HepG2 (cell line): ENCODE measurements at regions of chr2 and their contacts with region 1.

Region 1: GRCh38 chr2:193584522-193584938 is 1389.8 kb upstream of the TMEFF2 start:
- DNase-seq: peak; percentile 71
- ATAC-seq: peak; percentile 96
- H3K4me3 ChIP-seq: no peak overlapping the region
- H3K27ac ChIP-seq: no peak overlapping the region
- H3K4me1 ChIP-seq: peaks cover 14% of the 10 kb centered on the region; the same call in 1 of the 2 replicates
- H3K27me3 ChIP-seq: no peaks in the 10 kb centered on the region
- CTCF ChIP-seq: peak; percentile 93
- EP300 ChIP-seq: no peak
- POLR2A ChIP-seq: no peak
- RAD21 ChIP-seq: peak; percentile 81

Region 2: GRCh38 chr2:192194866-192195547 is 1389.5 kb before region 1 on chr2 and contains the start of gene TMEFF2:
- CTCF ChIA-PET with region 1: no interaction called
- POLR2A ChIA-PET with region 1: no interaction called
- in situ Hi-C with region 1: no loop called
- intact Hi-C with region 1: loop called (anchors 5 kb)
- DNase-seq: peak; percentile 10
- ATAC-seq: peak; percentile 78
- H3K4me3 ChIP-seq: peak within 1 kb of the TSS; percentile 20 to 56 (median 32); a peak in 4 of 6 replicates
- H3K27ac ChIP-seq: no peak within 1 kb of the TSS
- H3K4me1 ChIP-seq: no peaks in the 10 kb centered on the region
- H3K27me3 ChIP-seq: peaks cover 12 to 46% of the 10 kb centered on the region in 2 experiments; a peak in 4 of 5 replicates
- CTCF ChIP-seq: peak; percentile 33; the same call in 1 of the 2 replicates
- EP300 ChIP-seq: no peak
- POLR2A ChIP-seq: no peak
- RAD21 ChIP-seq: no peak
- total RNA-seq, gene TMEFF2: not detected in 2 replicates

Region 3: GRCh38 chr2:192749606-192750200 is 834.8 kb before region 1 on chr2:
- CTCF ChIA-PET with region 1: interaction called, 7 read pairs
- POLR2A ChIA-PET with region 1: no interaction called
- in situ Hi-C with region 1: loop called (anchors 25 kb)
- intact Hi-C with region 1: loop called (anchors 1 kb)
- DNase-seq: peak; percentile 9
- ATAC-seq: peak; percentile 85
- H3K4me3 ChIP-seq: no peak overlapping the region
- H3K27ac ChIP-seq: no peak overlapping the region
- H3K4me1 ChIP-seq: no peaks in the 10 kb centered on the region
- H3K27me3 ChIP-seq: no peaks in the 10 kb centered on the region
- CTCF ChIP-seq: peak; percentile 49
- EP300 ChIP-seq: no peak
- POLR2A ChIP-seq: no peak
- RAD21 ChIP-seq: no peak

Region 4: DNA sequence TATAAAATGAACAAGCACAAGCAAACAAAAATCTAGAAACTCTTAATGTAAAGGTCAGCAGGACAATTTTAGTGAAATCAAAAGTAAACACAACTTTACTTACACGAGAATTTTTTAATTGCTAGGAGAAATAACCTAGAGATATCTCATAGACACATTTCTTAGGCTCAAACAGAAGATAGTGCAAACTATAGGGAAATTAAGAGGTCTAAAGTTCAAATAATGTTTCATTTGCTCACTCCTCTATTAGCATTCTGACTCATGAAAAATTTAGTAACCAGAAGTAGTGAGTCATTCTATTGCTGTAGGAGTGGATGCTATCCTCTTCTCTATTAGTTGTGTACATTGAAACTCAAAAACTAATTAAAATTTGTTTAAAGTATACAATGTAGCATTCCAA is 481.5 kb before region 1 on chr2:
- CTCF ChIA-PET with region 1: no interaction called
- POLR2A ChIA-PET with region 1: no interaction called
- in situ Hi-C with region 1: no loop called
- intact Hi-C with region 1: loop called (anchors 10 kb)
- DNase-seq: peak; percentile 2
- ATAC-seq: no peak
- H3K4me3 ChIP-seq: no peak overlapping the region
- H3K27ac ChIP-seq: no peak overlapping the region
- H3K4me1 ChIP-seq: no peaks in the 10 kb centered on the region
- H3K27me3 ChIP-seq: no peaks in the 10 kb centered on the region
- CTCF ChIP-seq: no peak
- EP300 ChIP-seq: no peak
- POLR2A ChIP-seq: no peak
- RAD21 ChIP-seq: no peak

Region 5: GRCh38 chr2:193240752-193241151 is 343.8 kb before region 1 on chr2:
- CTCF ChIA-PET with region 1: interaction called, 5 read pairs
- POLR2A ChIA-PET with region 1: no interaction called
- in situ Hi-C with region 1: no loop called
- intact Hi-C with region 1: loop called (anchors 1 kb)
- DNase-seq: peak; percentile 7
- ATAC-seq: peak; percentile 81
- H3K4me3 ChIP-seq: no peak overlapping the region
- H3K27ac ChIP-seq: no peak overlapping the region
- H3K4me1 ChIP-seq: no peaks in the 10 kb centered on the region
- H3K27me3 ChIP-seq: no peaks in the 10 kb centered on the region
- CTCF ChIP-seq: peak; percentile 44
- EP300 ChIP-seq: no peak
- POLR2A ChIP-seq: no peak
- RAD21 ChIP-seq: no peak

Region 6: GRCh38 chr2:193315428-193316091 is 269.0 kb before region 1 on chr2:
- CTCF ChIA-PET with region 1: no interaction called
- POLR2A ChIA-PET with region 1: no interaction called
- in situ Hi-C with region 1: no loop called
- intact Hi-C with region 1: loop called (anchors 10 kb)
- DNase-seq: no peak
- ATAC-seq: no peak
- H3K4me3 ChIP-seq: no peak overlapping the region
- H3K27ac ChIP-seq: no peak overlapping the region
- H3K4me1 ChIP-seq: no peaks in the 10 kb centered on the region
- H3K27me3 ChIP-seq: no peaks in the 10 kb centered on the region
- CTCF ChIP-seq: no peak
- EP300 ChIP-seq: no peak
- POLR2A ChIP-seq: no peak
- RAD21 ChIP-seq: no peak

Region 7: DNA sequence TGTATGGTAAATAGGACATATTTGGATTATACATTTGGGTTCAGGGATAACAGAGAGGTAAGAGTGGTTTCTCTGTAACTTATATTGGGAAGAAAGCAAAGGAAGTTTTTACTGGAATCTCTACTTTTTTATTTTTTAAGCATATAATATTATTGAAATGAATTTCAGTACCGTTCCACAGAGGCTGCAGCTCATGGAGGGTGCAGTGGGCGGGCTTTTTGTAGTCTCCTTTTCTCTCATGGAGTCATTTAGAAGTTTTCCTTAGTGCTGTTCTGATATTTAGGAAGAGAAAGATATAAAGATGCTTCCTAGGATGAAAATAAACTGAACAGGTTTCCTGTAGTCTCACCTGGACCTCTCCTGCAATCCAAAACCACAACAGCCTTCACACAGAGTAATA is 236.5 kb before region 1 on chr2:
- CTCF ChIA-PET with region 1: no interaction called
- POLR2A ChIA-PET with region 1: no interaction called
- in situ Hi-C with region 1: no loop called
- intact Hi-C with region 1: loop called (anchors 5 kb)
- DNase-seq: no peak
- ATAC-seq: no peak
- H3K4me3 ChIP-seq: peak overlapping the region; percentile 43 to 60 (median 56); a peak in 4 of 6 replicates
- H3K27ac ChIP-seq: no peak overlapping the region
- H3K4me1 ChIP-seq: peaks cover 7% of the 10 kb centered on the region
- H3K27me3 ChIP-seq: no peaks in the 10 kb centered on the region
- CTCF ChIP-seq: no peak
- EP300 ChIP-seq: no peak
- POLR2A ChIP-seq: no peak
- RAD21 ChIP-seq: no peak

Region 8: GRCh38 chr2:193608451-193608850 is 23.9 kb after region 1 on chr2:
- CTCF ChIA-PET with region 1: no interaction called
- POLR2A ChIA-PET with region 1: no interaction called
- in situ Hi-C with region 1: no loop called
- intact Hi-C with region 1: no loop called
- DNase-seq: no peak
- ATAC-seq: no peak
- H3K4me3 ChIP-seq: no peak overlapping the region
- H3K27ac ChIP-seq: no peak overlapping the region
- H3K4me1 ChIP-seq: no peaks in the 10 kb centered on the region
- H3K27me3 ChIP-seq: no peaks in the 10 kb centered on the region
- CTCF ChIP-seq: no peak
- EP300 ChIP-seq: no peak
- POLR2A ChIP-seq: no peak
- RAD21 ChIP-seq: no peak